Heart left ventricle (tissue), 16 donors: ENCODE measurements at regions of chr10 and their contacts with region 1.

Region 1: GRCh38 chr10:72273410-72274212 is at the start of gene DDIT4:
- DNase-seq: peak; percentile 99 to 100 (median 100)
- ATAC-seq: peak; percentile 91 to 94 (median 92)
- H3K4me3 ChIP-seq: peak within 1 kb of the TSS; percentile 66 to 98 (median 76)
- H3K27ac ChIP-seq: peak within 1 kb of the TSS; percentile 95 to 100 (median 99)
- H3K4me1 ChIP-seq: peaks cover 6 to 54% (median 34%) of the 10 kb centered on the region in 12 donors
- H3K27me3 ChIP-seq: no peaks in the 10 kb centered on the region
- CTCF ChIP-seq: no peak
- POLR2A ChIP-seq: peak; percentile 99 to 100
- total RNA-seq, gene DDIT4: 14.6 to 68.2 (median 40.4) TPM

Region 2: GRCh38 chr10:72215652-72216549 is 57.7 kb before region 1 on chr10 and contains the starts of genes ANAPC16 and ASCC1:
- intact Hi-C with region 1: loop called in 2 of 10 experiments (anchors 2 kb)
- DNase-seq: peak; percentile 91 to 96 (median 93)
- ATAC-seq: peak; percentile 92 to 99 (median 98)
- H3K4me3 ChIP-seq: peak within 1 kb of the TSS; percentile 62 to 91 (median 72)
- H3K27ac ChIP-seq: peak within 1 kb of the TSS; percentile 91 to 100 (median 98)
- H3K4me1 ChIP-seq: peaks cover 9 to 54% (median 38%) of the 10 kb centered on the region in 12 donors
- H3K27me3 ChIP-seq: no peaks in the 10 kb centered on the region
- CTCF ChIP-seq: peak in 1 of 12 donors; percentile 5
- POLR2A ChIP-seq: peak; percentile 41 to 92
- total RNA-seq, gene ANAPC16: 135 to 237 (median 179) TPM
- total RNA-seq, gene ASCC1: 26.4 to 44.8 (median 35.3) TPM

Region 3: GRCh38 chr10:72229261-72230251 is 44.1 kb before region 1 on chr10:
- intact Hi-C with region 1: no loop called
- DNase-seq: no peak
- ATAC-seq: peak in 3 of 4 donors; percentile 28 to 57 (median 56)
- H3K4me3 ChIP-seq: no peak overlapping the region
- H3K27ac ChIP-seq: peak overlapping the region in 8 of 12 donors; percentile 12 to 77 (median 52)
- H3K4me1 ChIP-seq: peaks cover 0 to 42% (median 11%) of the 10 kb centered on the region in 12 donors
- H3K27me3 ChIP-seq: no peaks in the 10 kb centered on the region
- CTCF ChIP-seq: no peak
- POLR2A ChIP-seq: no peak

Region 4: GRCh38 chr10:72248468-72249151 is 25.0 kb before region 1 on chr10:
- intact Hi-C with region 1: loop called in 5 of 10 experiments (anchors 1 to 2 kb)
- DNase-seq: peak; percentile 88 to 91 (median 88)
- ATAC-seq: peak; percentile 87 to 93 (median 90)
- H3K4me3 ChIP-seq: peak overlapping the region in 9 of 12 donors; percentile 6 to 39 (median 16)
- H3K27ac ChIP-seq: peak overlapping the region; percentile 81 to 96 (median 92)
- H3K4me1 ChIP-seq: peaks cover 28 to 100% (median 87%) of the 10 kb centered on the region in 12 donors
- H3K27me3 ChIP-seq: no peaks in the 10 kb centered on the region
- CTCF ChIP-seq: no peak
- POLR2A ChIP-seq: peak in 1 of 2 donors; percentile 23

Region 5: GRCh38 chr10:72260588-72261322 is 12.9 kb before region 1 on chr10:
- intact Hi-C with region 1: loop called in 4 of 10 experiments (anchors 1 to 2 kb)
- DNase-seq: peak; percentile 85 to 94 (median 88)
- ATAC-seq: peak; percentile 81 to 93 (median 90)
- H3K4me3 ChIP-seq: peak overlapping the region; percentile 16 to 70 (median 52)
- H3K27ac ChIP-seq: peak overlapping the region; percentile 75 to 98 (median 92)
- H3K4me1 ChIP-seq: peaks cover 20 to 79% (median 50%) of the 10 kb centered on the region in 12 donors
- H3K27me3 ChIP-seq: no peaks in the 10 kb centered on the region
- CTCF ChIP-seq: peak in 2 of 12 donors; percentile 11 to 22
- POLR2A ChIP-seq: peak in 1 of 2 donors; percentile 35

Region 6: DNA sequence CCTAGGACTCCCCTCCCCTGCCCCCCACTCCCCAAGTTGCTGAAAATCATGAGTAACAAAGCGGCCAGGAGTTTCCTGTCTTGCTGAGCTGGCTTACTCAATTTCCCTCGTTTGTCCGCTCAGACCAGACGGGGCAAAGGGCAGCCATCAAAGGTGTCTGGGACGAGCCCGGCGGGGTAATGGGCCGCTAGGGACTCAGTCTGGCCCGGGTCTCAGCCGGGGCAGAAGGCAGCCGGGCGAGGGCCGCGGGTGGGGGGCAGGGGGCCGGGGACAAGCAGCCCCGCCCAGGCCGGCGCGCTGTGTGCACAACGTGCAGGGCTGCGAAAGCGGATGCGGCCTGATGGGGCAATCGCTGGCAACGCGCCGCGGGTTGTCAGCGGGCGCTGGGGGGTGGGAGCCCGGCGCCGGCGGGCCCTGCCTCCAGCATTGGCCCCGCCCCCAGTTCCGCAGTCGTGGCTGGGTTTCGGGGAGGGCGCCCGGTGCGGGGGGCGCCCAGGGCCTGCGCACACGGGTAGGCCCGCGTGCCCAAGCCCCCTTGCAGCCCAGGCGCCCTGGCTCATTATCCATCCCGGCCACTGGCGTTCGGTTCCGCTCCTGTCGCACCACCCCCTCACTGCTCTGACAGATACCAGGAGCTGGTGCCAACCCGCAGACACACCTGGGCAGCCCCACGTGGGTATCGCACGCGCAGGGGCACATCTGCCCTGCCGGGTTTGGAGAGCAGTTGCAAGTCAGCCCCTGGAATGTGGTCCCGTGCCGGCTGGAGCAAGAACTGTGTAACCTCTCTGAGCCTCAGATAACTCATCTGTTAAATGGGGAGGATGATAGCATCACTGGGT is 46.0 kb after region 1 on chr10:
- intact Hi-C with region 1: loop called in 8 of 10 experiments (anchors 2 to 10 kb)
- DNase-seq: peak; percentile 92 to 98 (median 95)
- ATAC-seq: peak; percentile 33 to 86 (median 74)
- H3K4me3 ChIP-seq: peak overlapping the region in 11 of 12 donors; percentile 0 to 60 (median 51)
- H3K27ac ChIP-seq: peak overlapping the region; percentile 51 to 97 (median 86)
- H3K4me1 ChIP-seq: peaks cover 18 to 96% (median 62%) of the 10 kb centered on the region in 12 donors
- H3K27me3 ChIP-seq: no peaks in the 10 kb centered on the region
- CTCF ChIP-seq: peak in 1 of 12 donors; percentile 16
- POLR2A ChIP-seq: peak in 1 of 2 donors; percentile 54